ENCODE measurements at regions of chr5 and their contacts with region 1.

Region 1: DNA sequence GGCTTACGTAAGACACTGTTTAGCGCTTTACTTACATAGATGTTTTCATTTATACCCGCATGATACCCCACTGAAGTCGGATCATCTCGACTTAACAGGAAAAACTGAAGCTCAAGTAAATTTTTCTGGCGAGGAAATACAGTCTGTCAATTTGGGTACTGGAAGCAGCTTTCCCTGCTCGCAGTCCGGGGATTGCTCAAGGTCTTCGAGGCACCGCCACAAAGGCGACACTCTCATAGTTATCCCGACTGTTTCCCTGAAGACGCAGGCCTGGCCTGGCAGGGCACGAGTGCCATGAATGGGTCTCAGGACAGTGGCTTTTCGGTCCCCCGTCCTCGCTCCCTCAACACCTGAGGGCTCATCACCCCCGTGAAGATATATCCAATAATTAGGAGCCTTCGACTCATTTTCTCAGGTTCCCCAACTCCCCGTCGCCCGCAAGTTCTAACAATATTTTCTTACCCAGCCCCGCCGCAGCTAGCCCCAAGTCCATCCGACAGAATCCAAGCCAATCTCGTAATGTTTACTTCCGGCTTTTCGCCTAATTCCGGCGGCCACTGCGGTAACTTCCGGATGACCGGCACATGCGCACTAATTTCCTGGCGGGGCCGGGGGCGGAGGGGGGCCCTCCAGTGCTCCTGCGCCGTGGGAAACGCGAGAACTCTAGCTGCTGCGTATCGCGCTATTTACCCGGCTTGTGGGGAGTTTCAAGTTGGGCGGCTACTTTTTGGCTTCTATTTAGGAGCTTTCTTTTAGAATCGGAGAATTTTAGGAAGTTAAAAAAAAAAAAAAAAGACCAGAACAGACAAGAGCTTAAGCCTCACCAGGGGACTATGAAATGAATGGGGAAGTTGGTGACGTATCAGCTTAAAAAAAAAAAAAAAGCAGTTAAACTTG is at the start of gene SLU7:
- DNase-seq: peak; percentile 81 to 91 (median 88)
- H3K4me3 ChIP-seq: peak within 1 kb of the TSS; percentile 67 to 100 (median 90)
- H3K27ac ChIP-seq: peak within 1 kb of the TSS; percentile 33 to 97 (median 91)
- H3K27me3 ChIP-seq: no peaks in the 10 kb centered on the region
- CTCF ChIP-seq: peak in 24 of 56 donors; percentile 3 to 62 (median 22)
- total RNA-seq, gene SLU7: 41.4 to 128 (median 79.4) TPM

Region 2: GRCh38 chr5:160399402-160400353 is 19.1 kb before region 1 on chr5 and contains the start of gene FAM200C:
- intact Hi-C with region 1: loop called in 1 of 2 experiments (anchors 1 kb)
- DNase-seq: peak; percentile 81 to 95 (median 90)
- H3K4me3 ChIP-seq: peak within 1 kb of the TSS; percentile 66 to 95 (median 84)
- H3K27ac ChIP-seq: peak within 1 kb of the TSS; percentile 78 to 99 (median 96)
- H3K27me3 ChIP-seq: no peaks in the 10 kb centered on the region
- CTCF ChIP-seq: peak in 17 of 56 donors; percentile 6 to 46 (median 22)
- total RNA-seq, gene FAM200C: 6.3 to 14.9 (median 10.6) TPM